ENCODE measurements at regions of chr3 and their contacts with region 1.

Region 1: DNA sequence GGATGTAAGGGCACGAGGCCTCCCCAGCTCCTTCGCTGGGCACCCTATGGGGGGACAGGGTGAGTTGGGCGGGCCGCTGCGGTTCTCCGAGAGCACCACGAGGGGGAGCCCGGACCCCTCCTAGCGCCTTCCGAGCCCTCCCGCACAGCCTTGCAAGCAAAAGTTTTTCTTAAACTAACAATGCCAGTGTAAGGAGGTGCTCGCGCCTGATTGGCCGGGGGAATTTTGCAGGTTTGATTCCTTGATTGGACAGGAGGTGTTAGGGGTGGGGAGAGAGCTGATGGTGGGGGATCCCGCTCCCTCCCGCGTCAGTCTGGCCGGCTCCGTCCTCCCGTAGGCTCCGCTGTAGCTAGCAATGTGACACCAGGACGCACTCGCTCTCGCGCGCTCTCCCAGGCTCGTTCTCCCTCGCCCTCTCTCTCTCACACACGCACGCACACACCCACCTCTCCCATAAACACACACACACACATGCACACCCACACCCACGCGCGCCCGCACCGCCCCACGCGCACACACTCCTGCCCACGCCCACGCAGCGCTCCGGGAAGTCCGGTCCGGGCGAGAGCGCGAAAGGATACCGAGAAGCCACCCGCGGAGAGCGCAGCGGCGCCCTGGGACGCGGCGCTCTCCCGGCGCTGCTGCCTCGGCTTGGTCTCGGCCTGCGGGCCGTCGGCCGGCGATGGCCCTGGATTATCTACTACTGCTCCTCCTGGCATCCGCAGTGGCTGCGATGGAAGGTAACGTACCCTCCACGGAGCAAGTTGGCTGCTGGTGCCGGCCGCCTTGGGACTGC is at the start of gene EPHB1:
- DNase-seq: peak; percentile 87
- ATAC-seq: peak; percentile 93
- H3K4me3 ChIP-seq: peak within 1 kb of the TSS; percentile 47
- H3K27ac ChIP-seq: no peak within 1 kb of the TSS
- H3K4me1 ChIP-seq: peaks cover 1% of the 10 kb centered on the region; the same call in 1 of the 2 replicates
- H3K27me3 ChIP-seq: peaks cover 51% of the 10 kb centered on the region
- CTCF ChIP-seq: peak; percentile 80
- POLR2A ChIP-seq: no peak
- RAD21 ChIP-seq: peak; percentile 83
- total RNA-seq, gene EPHB1: under 0.01 and 0.36 TPM in 2 replicates

Region 2: GRCh38 chr3:135895106-135895733 is 1100.1 kb after region 1 on chr3:
- CTCF ChIA-PET with region 1: interaction called, 4 read pairs
- POLR2A ChIA-PET with region 1: no interaction called
- dilution Hi-C with region 1: no loop called
- in situ Hi-C with region 1: loop called (anchors 5 kb)
- intact Hi-C with region 1: loop called (anchors 1 kb)
- DNase-seq: peak; percentile 79
- ATAC-seq: peak; percentile 78
- H3K4me3 ChIP-seq: no peak overlapping the region
- H3K27ac ChIP-seq: no peak overlapping the region
- H3K4me1 ChIP-seq: peaks cover 8% of the 10 kb centered on the region
- H3K27me3 ChIP-seq: no peaks in the 10 kb centered on the region
- CTCF ChIP-seq: peak; percentile 85
- POLR2A ChIP-seq: no peak
- RAD21 ChIP-seq: peak; percentile 88